Activated T-helper 1 cell treated with anti-CD3 and anti-CD28 coated beads, Interleukin-12 subunit alpha, Interleukin-12 subunit beta, Interleukin-2, Interleukin-4 antibody, amounts not matched to agents 30 ng/mL and 10 ng/mL and 1 ng/mL, durations not matched to agents 14 hours and 24 hours and 36 hours (primary cell): ENCODE measurements at regions of chr2 and their contacts with region 1.

Region 1: GRCh38 chr2:159968279-159968900 is 94.0 kb downstream of the PLA2R1 start:
- DNase-seq: no peak
- H3K4me3 Mint-ChIP-seq: no peak overlapping the region
- H3K27ac Mint-ChIP-seq: no peak overlapping the region
- H3K4me1 Mint-ChIP-seq: no peaks in the 10 kb centered on the region
- H3K27me3 Mint-ChIP-seq: peaks cover 2% of the 10 kb centered on the region

Region 2: GRCh38 chr2:159118115-159118858 is 850.1 kb before region 1 on chr2:
- intact Hi-C with region 1: loop called (anchors 2 kb)
- DNase-seq: peak; percentile 52
- H3K4me3 Mint-ChIP-seq: no peak overlapping the region
- H3K27ac Mint-ChIP-seq: no peak overlapping the region
- H3K4me1 Mint-ChIP-seq: no peaks in the 10 kb centered on the region
- H3K27me3 Mint-ChIP-seq: peaks cover 2% of the 10 kb centered on the region